ENCODE measurements at regions of chr5 and their contacts with region 1.

Region 1: DNA sequence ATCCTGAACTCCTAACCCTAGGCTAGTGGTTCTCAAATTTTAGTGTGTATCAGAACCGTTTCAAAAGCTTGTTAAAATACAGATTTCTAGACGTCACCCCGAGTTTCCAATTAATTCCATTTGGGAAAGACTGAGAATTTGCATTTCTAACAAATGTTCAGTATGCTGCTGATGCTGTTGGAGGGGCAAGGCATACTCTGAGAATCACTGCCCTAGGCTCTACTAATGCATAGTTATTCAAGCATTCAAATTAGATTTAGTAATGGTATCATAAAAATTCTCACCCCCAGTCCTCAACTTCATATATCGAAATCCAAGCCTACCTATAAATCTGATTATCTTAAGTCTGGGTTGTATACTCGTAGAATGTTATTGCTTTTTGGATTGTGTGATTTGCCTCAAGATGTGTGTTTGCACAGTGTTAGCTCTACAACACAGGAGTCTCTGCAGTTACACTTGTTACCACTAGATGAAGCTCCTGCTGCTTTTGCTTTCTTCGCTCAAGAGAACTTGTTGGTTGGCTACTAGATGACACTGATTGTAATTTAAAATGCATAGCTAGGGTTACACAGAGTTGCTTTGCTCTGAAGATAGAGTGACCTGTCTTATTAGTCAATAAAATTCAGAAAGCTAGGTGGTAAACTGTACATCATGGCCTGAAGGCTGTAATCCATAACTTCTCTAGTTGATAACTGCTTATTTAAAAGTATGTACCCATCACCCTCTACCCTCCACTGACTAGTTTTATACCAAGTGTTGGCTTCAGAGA is 7.5 kb upstream of the ERAP2 start:
- DNase-seq: no peak
- ATAC-seq: peak; percentile 86
- H3K4me3 ChIP-seq: no peak overlapping the region
- H3K27ac ChIP-seq: no peak overlapping the region
- H3K4me1 ChIP-seq: peaks cover 28% of the 10 kb centered on the region
- H3K27me3 ChIP-seq: no peaks in the 10 kb centered on the region
- CTCF ChIP-seq: peak; percentile 99 to 100 (median 100); a peak in 5 of 6 replicates
- EP300 ChIP-seq: no peak
- POLR2A ChIP-seq: no peak
- RAD21 ChIP-seq: peak; percentile 100

Region 2: GRCh38 chr5:96763026-96763425 is 105.8 kb before region 1 on chr5:
- CTCF ChIA-PET with region 1: no interaction called
- POLR2A ChIA-PET with region 1: interaction called, 3 read pairs
- RAD21 ChIA-PET with region 1: interaction called, 10 read pairs
- SMC1A ChIA-PET with region 1: interaction called, 14 read pairs
- in situ Hi-C with region 1: no loop called
- intact Hi-C with region 1: loop called (anchors 5 kb)
- DNase-seq: no peak
- ATAC-seq: no peak
- H3K4me3 ChIP-seq: no peak overlapping the region
- H3K27ac ChIP-seq: no peak overlapping the region
- H3K4me1 ChIP-seq: no peaks in the 10 kb centered on the region
- H3K27me3 ChIP-seq: no peaks in the 10 kb centered on the region
- CTCF ChIP-seq: no peak
- EP300 ChIP-seq: no peak
- POLR2A ChIP-seq: no peak
- RAD21 ChIP-seq: no peak

Region 3: GRCh38 chr5:96885518-96886338 is 16.9 kb after region 1 on chr5:
- CTCF ChIA-PET with region 1: interaction called, 55 read pairs
- POLR2A ChIA-PET with region 1: interaction called, 27 read pairs
- RAD21 ChIA-PET with region 1: interaction called, 142 read pairs
- SMC1A ChIA-PET with region 1: interaction called, 169 read pairs
- in situ Hi-C with region 1: no loop called
- intact Hi-C with region 1: no loop called
- DNase-seq: peak; percentile 92
- ATAC-seq: peak; percentile 88
- H3K4me3 ChIP-seq: peak overlapping the region; percentile 31
- H3K27ac ChIP-seq: peak overlapping the region; percentile 71
- H3K4me1 ChIP-seq: peaks cover 33% of the 10 kb centered on the region
- H3K27me3 ChIP-seq: no peaks in the 10 kb centered on the region
- CTCF ChIP-seq: no peak
- EP300 ChIP-seq: peak; percentile 84 to 88; a peak in 2 of 4 replicates
- POLR2A ChIP-seq: no peak
- RAD21 ChIP-seq: no peak

Region 4: DNA sequence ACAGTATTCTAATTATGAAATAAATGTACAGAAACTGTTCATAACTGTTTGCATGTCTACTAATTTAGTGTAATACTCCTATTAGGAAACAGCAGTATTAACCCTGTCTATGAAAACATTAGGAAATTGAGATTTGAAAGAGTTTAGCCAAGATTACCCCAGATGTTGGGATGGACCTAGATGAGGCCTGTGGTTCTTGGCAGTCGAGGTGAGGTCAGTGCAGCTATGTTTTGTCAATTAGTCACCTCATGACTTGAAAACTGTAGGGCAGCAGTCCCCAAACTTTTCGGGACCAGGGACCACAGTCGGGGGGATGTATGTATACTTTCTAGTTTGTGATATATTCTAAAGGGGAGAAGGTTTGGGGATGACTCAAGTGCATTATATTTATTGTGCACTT is 71.8 kb after region 1 on chr5:
- CTCF ChIA-PET with region 1: interaction called, 22 read pairs
- POLR2A ChIA-PET with region 1: interaction called, 12 read pairs
- RAD21 ChIA-PET with region 1: interaction called, 28 read pairs
- SMC1A ChIA-PET with region 1: interaction called, 50 read pairs
- in situ Hi-C with region 1: no loop called
- intact Hi-C with region 1: loop called (anchors 1 kb)
- DNase-seq: no peak
- ATAC-seq: no peak
- H3K4me3 ChIP-seq: peak overlapping the region; percentile 40
- H3K27ac ChIP-seq: no peak overlapping the region
- H3K4me1 ChIP-seq: peaks cover 5% of the 10 kb centered on the region; the same call in 1 of the 2 replicates
- H3K27me3 ChIP-seq: no peaks in the 10 kb centered on the region
- CTCF ChIP-seq: no peak
- EP300 ChIP-seq: no peak
- POLR2A ChIP-seq: no peak
- RAD21 ChIP-seq: no peak

Region 5: DNA sequence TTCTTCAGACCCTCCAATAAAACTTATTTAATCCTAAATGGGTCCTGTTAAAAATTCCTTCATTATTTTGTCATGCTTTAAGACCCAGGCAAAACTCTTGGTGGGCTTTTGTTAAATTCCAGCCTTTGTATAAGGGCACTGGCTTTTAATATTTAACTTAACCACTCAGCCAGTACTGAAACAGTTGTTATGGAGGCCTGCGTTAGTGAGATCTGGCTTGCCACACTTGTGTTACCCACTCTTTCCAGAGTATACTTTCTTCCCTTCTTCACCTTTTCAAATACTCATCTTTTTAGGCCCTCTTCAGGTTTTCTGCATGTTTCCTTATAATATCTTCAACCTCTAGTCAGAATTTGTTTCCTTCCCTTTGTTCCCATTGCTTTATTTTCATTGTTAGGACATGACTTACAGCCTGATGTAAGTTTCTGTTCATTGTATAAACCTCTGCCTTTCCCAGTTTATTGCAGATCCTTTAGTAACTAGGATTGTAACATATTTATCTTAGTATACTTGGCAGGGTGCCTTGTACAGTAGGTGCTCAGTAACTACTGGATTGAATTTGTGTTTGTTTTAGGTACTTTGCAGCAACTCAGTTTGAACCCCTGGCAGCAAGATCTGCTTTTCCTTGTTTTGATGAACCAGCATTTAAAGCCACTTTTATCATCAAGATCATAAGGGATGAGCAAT is 115.9 kb after region 1 on chr5:
- CTCF ChIA-PET with region 1: interaction called, 14 read pairs
- POLR2A ChIA-PET with region 1: no interaction called
- RAD21 ChIA-PET with region 1: interaction called, 24 read pairs
- SMC1A ChIA-PET with region 1: interaction called, 45 read pairs
- in situ Hi-C with region 1: no loop called
- intact Hi-C with region 1: loop called (anchors 5 kb)
- DNase-seq: no peak
- ATAC-seq: no peak
- H3K4me3 ChIP-seq: no peak overlapping the region
- H3K27ac ChIP-seq: no peak overlapping the region
- H3K4me1 ChIP-seq: no peaks in the 10 kb centered on the region
- H3K27me3 ChIP-seq: no peaks in the 10 kb centered on the region
- CTCF ChIP-seq: no peak
- EP300 ChIP-seq: no peak
- POLR2A ChIP-seq: no peak
- RAD21 ChIP-seq: no peak

Region 6: GRCh38 chr5:97019435-97020117 is 150.8 kb after region 1 on chr5:
- CTCF ChIA-PET with region 1: interaction called, 22 read pairs
- POLR2A ChIA-PET with region 1: no interaction called
- RAD21 ChIA-PET with region 1: interaction called, 9 read pairs
- SMC1A ChIA-PET with region 1: interaction called, 7 read pairs
- in situ Hi-C with region 1: no loop called
- intact Hi-C with region 1: no loop called
- DNase-seq: no peak
- ATAC-seq: no peak
- H3K4me3 ChIP-seq: no peak overlapping the region
- H3K27ac ChIP-seq: no peak overlapping the region
- H3K4me1 ChIP-seq: peaks cover 5% of the 10 kb centered on the region; the same call in 1 of the 2 replicates
- H3K27me3 ChIP-seq: no peaks in the 10 kb centered on the region
- CTCF ChIP-seq: no peak
- EP300 ChIP-seq: no peak
- POLR2A ChIP-seq: no peak
- RAD21 ChIP-seq: no peak

Region 7: DNA sequence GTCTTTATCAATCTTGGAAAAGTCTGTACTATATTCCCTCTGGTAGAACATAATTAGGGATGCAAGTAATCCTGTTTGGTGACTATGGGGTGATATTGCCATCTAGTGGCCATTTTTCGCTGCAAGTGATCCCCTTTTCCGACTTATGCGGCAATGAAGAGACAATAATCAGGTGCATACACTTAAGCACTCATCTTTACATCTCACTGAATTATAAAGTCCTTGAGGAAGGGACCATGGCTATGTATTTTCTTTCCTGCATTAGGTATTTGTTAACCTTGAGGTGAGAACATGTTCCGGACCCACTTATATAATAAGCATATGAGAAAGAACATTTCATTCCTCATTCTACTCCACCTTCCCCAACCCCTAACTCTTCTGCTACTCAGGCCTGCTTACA is 293.3 kb after region 1 on chr5:
- CTCF ChIA-PET with region 1: interaction called, 223 read pairs
- POLR2A ChIA-PET with region 1: interaction called, 3 read pairs
- RAD21 ChIA-PET with region 1: interaction called, 68 read pairs
- SMC1A ChIA-PET with region 1: interaction called, 178 read pairs
- in situ Hi-C with region 1: loop called (anchors 5 kb)
- intact Hi-C with region 1: loop called (anchors 1 kb)
- DNase-seq: peak; percentile 44
- ATAC-seq: peak; percentile 82
- H3K4me3 ChIP-seq: no peak overlapping the region
- H3K27ac ChIP-seq: no peak overlapping the region
- H3K4me1 ChIP-seq: no peaks in the 10 kb centered on the region; the same call in 1 of the 2 replicates
- H3K27me3 ChIP-seq: no peaks in the 10 kb centered on the region
- CTCF ChIP-seq: peak; percentile 77 to 84 (median 82)
- EP300 ChIP-seq: no peak
- POLR2A ChIP-seq: no peak
- RAD21 ChIP-seq: peak; percentile 85

Region 8: DNA sequence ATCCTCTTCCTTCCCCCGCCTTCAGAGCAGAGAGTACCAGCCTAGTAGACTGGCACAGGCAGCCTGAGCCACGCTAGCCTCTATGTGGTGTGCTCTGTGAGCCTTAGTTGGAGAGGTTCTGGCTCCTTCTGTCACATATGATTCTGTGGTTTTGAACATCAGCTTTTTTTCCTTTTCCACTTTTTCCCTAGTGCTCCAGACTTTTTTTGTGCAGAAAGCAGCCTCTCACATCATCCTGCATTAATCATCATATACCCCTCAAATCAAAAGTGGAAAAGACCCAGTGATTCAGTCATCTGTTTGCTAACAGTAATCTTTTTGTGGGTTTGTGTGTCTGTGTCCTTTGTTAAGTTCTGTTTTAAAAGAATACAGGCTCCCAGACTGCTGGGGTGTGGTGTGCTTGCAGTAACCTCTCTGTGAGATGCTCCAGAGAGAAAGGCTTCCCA is 1240.8 kb after region 1 on chr5:
- CTCF ChIA-PET with region 1: no interaction called
- POLR2A ChIA-PET with region 1: no interaction called
- RAD21 ChIA-PET with region 1: no interaction called
- SMC1A ChIA-PET with region 1: no interaction called
- in situ Hi-C with region 1: no loop called
- intact Hi-C with region 1: no loop called
- DNase-seq: no peak
- ATAC-seq: no peak
- H3K4me3 ChIP-seq: no peak overlapping the region
- H3K27ac ChIP-seq: no peak overlapping the region
- H3K4me1 ChIP-seq: no peaks in the 10 kb centered on the region
- H3K27me3 ChIP-seq: no peaks in the 10 kb centered on the region
- CTCF ChIP-seq: no peak
- EP300 ChIP-seq: no peak
- POLR2A ChIP-seq: no peak
- RAD21 ChIP-seq: no peak

Measured in GM12878 (cell line).